Panc1 (cell line): ENCODE measurements at regions of chr10 and their contacts with region 1.

Region 1: GRCh38 chr10:132575356-132576201 is 38.0 kb downstream of the INPP5A start:
- DNase-seq: peak; percentile 32
- ATAC-seq: peak; percentile 48
- H3K4me3 ChIP-seq: peak overlapping the region; percentile 18 to 42
- H3K27ac ChIP-seq: peak overlapping the region; percentile 75
- H3K4me1 ChIP-seq: peaks cover 78% of the 10 kb centered on the region
- H3K27me3 ChIP-seq: no peaks in the 10 kb centered on the region
- CTCF ChIP-seq: no peak

Region 2: GRCh38 chr10:132223156-132223590 is 352.4 kb before region 1 on chr10:
- CTCF ChIA-PET with region 1: interaction called, 13 read pairs
- POLR2A ChIA-PET with region 1: no interaction called
- in situ Hi-C with region 1: no loop called
- intact Hi-C with region 1: no loop called
- DNase-seq: peak; percentile 72
- ATAC-seq: peak; percentile 97
- H3K4me3 ChIP-seq: no peak overlapping the region
- H3K27ac ChIP-seq: peak overlapping the region; percentile 72
- H3K4me1 ChIP-seq: peaks cover 8% of the 10 kb centered on the region
- H3K27me3 ChIP-seq: no peaks in the 10 kb centered on the region
- CTCF ChIP-seq: peak; percentile 100

Region 3: GRCh38 chr10:132443605-132443982 is 132.0 kb before region 1 on chr10:
- CTCF ChIA-PET with region 1: no interaction called
- POLR2A ChIA-PET with region 1: no interaction called
- in situ Hi-C with region 1: no loop called
- intact Hi-C with region 1: no loop called
- DNase-seq: no peak
- ATAC-seq: no peak
- H3K4me3 ChIP-seq: no peak overlapping the region
- H3K27ac ChIP-seq: 0 out of 2 replicates have a peak overlapping the region, but pooled peaks have one; percentile 44
- H3K4me1 ChIP-seq: peaks cover 46% of the 10 kb centered on the region
- H3K27me3 ChIP-seq: no peaks in the 10 kb centered on the region
- CTCF ChIP-seq: no peak

Region 4: DNA sequence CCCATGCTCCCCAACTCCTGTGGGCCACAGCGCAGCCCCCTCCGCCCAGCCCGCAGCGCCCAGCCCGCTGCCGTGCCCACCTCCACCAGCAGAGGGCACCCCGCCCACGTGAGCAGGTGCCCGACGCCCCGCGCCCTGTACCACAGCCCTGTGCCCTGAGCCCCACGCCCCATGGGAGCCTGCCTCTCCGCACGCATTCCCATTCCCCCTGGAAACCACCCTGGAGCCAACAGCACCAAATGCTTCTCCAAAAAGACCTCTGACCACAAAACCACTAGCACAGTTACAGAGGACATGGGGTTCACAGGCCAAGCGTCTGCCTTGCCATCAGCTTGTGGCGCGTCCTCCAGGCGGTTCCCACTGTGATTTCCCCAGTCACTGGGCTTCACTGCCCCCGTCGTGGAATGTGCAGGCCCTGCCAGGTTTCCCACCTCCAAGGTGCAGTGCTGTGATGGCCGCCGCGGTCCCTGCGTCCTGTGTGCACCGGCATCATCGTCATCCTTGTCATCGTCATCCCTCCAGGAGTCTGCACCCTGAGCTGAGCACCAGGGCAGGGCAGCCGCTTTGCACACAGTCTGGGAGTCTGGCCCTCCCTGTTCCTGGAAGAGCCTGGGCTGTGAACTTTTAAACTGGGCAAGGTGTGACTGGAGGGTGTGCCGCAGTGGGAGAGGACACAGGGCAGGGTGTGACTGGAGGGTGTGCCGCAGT is 116.8 kb before region 1 on chr10:
- CTCF ChIA-PET with region 1: interaction called, 4 read pairs
- POLR2A ChIA-PET with region 1: no interaction called
- in situ Hi-C with region 1: no loop called
- intact Hi-C with region 1: loop called (anchors 1 kb)
- DNase-seq: no peak
- ATAC-seq: peak; percentile 72
- H3K4me3 ChIP-seq: no peak overlapping the region
- H3K27ac ChIP-seq: no peak overlapping the region; the same call in 1 of the 2 replicates
- H3K4me1 ChIP-seq: peaks cover 16% of the 10 kb centered on the region
- H3K27me3 ChIP-seq: no peaks in the 10 kb centered on the region
- CTCF ChIP-seq: peak; percentile 100

Region 5: DNA sequence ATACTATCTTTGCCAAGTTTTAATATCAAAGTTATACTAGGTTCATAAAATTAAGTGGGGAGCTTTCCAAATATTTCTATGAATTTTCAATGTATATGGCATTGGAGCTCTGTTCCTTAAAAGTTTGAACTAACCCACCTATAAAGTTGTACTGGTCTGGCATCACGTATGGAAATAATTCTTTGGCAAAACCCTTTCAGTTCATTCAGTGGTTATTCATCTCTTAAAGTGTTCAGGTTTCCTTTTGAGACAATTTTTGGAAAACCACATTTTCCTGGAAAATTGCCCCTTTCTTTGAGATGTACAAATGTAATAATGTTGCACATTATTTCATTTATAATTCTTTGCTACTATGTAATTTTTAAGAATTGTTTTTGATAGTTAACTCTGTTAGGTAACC is 100.5 kb before region 1 on chr10:
- CTCF ChIA-PET with region 1: no interaction called
- POLR2A ChIA-PET with region 1: interaction called, 12 read pairs
- in situ Hi-C with region 1: no loop called
- intact Hi-C with region 1: no loop called
- DNase-seq: no peak
- ATAC-seq: no peak
- H3K4me3 ChIP-seq: no peak overlapping the region
- H3K27ac ChIP-seq: no peak overlapping the region
- H3K4me1 ChIP-seq: no peaks in the 10 kb centered on the region; the same call in 1 of the 2 replicates
- H3K27me3 ChIP-seq: no peaks in the 10 kb centered on the region
- CTCF ChIP-seq: no peak

Region 6: GRCh38 chr10:132536971-132537712 is 38.4 kb before region 1 on chr10:
- CTCF ChIA-PET with region 1: no interaction called
- POLR2A ChIA-PET with region 1: no interaction called
- in situ Hi-C with region 1: no loop called
- intact Hi-C with region 1: loop called (anchors 5 kb)
- DNase-seq: peak; percentile 82
- ATAC-seq: peak; percentile 87
- H3K4me3 ChIP-seq: peak overlapping the region; percentile 66 to 73
- H3K27ac ChIP-seq: peak overlapping the region; percentile 83
- H3K4me1 ChIP-seq: peaks cover 75% of the 10 kb centered on the region
- H3K27me3 ChIP-seq: no peaks in the 10 kb centered on the region
- CTCF ChIP-seq: peak; percentile 70; the same call in 1 of the 2 replicates